ENCODE measurements at regions of chr19 and their contacts with region 1.

Region 1: DNA sequence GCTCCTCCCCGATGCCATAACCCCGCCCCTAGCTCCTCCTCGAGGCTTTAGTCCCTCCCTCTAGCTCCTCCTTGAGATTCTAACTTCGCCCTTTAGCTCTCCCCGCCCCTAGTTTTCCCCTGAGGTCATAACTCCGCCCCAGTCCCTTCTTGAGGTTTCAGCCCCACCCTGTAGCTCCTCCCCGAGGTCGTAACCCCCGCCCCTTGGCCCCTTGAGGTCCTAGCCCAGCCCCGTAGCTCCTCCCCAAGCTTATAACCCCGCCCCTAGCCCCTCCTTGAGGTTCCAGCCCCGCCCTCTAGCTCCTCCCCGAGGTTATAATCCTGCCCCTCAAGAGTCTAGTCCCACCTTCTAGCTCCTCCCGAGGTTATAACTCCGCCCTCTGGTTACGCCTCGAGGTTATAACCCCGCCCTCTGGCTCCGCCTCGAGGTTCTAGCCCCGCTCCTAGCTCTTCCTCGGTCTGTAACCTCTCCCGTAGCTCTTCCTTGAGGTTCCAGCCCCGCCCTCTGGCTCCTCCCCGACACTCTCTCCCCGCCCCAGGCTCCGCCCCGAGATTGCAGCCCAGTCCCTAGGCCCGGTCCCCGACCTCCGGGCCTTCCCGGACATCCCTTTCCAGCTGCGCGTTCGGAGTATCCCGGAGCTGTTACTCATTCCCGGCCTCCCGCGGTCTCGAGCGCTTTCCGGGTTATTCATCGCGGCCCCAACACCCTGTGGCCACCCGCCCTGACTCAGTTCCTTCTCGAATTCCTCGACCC is 1.4 kb downstream of the PLAUR start:
- DNase-seq: peak; percentile 94
- H3K4me3 Mint-ChIP-seq: peak overlapping the region; percentile 93
- H3K27ac Mint-ChIP-seq: peak overlapping the region; percentile 81
- H3K4me1 Mint-ChIP-seq: peaks cover 39% of the 10 kb centered on the region
- H3K27me3 Mint-ChIP-seq: peaks cover 2% of the 10 kb centered on the region

Region 2: GRCh38 chr19:43463381-43464136 is 205.0 kb before region 1 on chr19:
- intact Hi-C with region 1: loop called (anchors 1 kb)
- DNase-seq: peak; percentile 96
- H3K4me3 Mint-ChIP-seq: peak overlapping the region; percentile 92
- H3K27ac Mint-ChIP-seq: peak overlapping the region; percentile 90
- H3K4me1 Mint-ChIP-seq: peaks cover 45% of the 10 kb centered on the region
- H3K27me3 Mint-ChIP-seq: no peaks in the 10 kb centered on the region

Region 3: GRCh38 chr19:43522929-43523328 is 145.7 kb before region 1 on chr19:
- intact Hi-C with region 1: no loop called
- DNase-seq: no peak
- H3K4me3 Mint-ChIP-seq: no peak overlapping the region
- H3K27ac Mint-ChIP-seq: peak overlapping the region; percentile 53
- H3K4me1 Mint-ChIP-seq: peaks cover 33% of the 10 kb centered on the region
- H3K27me3 Mint-ChIP-seq: no peaks in the 10 kb centered on the region

Region 4: GRCh38 chr19:43532962-43533545 is 135.5 kb before region 1 on chr19 and contains the start of gene ZNF575:
- intact Hi-C with region 1: loop called (anchors 1 kb)
- DNase-seq: peak; percentile 81
- H3K4me3 Mint-ChIP-seq: peak within 1 kb of the TSS; percentile 96
- H3K27ac Mint-ChIP-seq: peak within 1 kb of the TSS; percentile 99
- H3K4me1 Mint-ChIP-seq: peaks cover 23% of the 10 kb centered on the region
- H3K27me3 Mint-ChIP-seq: no peaks in the 10 kb centered on the region
- total RNA-seq, gene ZNF575: 1.4 and 2.6 TPM in 2 replicates

Region 5: DNA sequence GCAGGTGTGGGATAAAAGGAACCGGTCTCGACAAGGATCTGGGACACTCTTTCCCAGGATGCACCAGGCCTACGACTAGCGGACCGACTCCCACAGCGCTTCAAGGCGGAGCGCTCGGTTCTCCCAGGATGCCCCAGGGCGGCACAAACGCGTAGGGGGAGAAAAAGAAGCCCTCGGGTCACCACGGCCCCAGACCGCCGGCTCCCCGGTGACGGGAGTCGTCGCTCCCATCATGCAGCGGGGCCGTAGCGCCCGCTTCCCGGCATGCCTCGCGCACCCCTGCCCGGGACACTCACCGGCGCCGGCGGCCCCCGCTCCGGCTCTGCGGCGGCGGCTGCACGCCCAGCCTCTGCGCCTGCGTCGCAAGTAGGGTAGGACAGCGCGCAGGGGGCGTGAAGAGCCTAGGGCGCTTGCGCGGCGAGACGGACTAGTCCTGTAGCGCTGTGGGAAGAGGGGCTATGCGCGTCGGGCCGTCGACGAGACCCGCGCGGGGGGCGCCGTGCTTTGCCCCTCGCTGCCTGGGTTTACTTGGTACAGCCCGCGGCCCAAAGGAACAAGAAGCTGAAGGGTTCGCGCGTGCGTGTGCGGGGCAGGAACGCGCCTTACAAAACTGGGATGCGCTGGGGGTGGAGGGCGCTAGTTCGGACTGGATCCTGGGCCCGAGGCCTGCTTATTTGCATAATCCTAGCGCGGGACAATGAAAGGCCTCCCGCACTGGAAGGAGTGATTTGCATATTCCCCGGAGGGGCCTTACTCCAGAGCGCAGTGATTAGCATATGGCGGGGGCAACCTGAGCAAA is 49.1 kb before region 1 on chr19 and contains the start of gene ZNF428:
- intact Hi-C with region 1: loop called (anchors 1 kb)
- DNase-seq: peak; percentile 86
- H3K4me3 Mint-ChIP-seq: peak within 1 kb of the TSS; percentile 98
- H3K27ac Mint-ChIP-seq: peak within 1 kb of the TSS; percentile 99
- H3K4me1 Mint-ChIP-seq: peaks cover 23% of the 10 kb centered on the region
- H3K27me3 Mint-ChIP-seq: no peaks in the 10 kb centered on the region
- total RNA-seq, gene ZNF428: 17.9 and 20.3 TPM in 2 replicates

Region 6: DNA sequence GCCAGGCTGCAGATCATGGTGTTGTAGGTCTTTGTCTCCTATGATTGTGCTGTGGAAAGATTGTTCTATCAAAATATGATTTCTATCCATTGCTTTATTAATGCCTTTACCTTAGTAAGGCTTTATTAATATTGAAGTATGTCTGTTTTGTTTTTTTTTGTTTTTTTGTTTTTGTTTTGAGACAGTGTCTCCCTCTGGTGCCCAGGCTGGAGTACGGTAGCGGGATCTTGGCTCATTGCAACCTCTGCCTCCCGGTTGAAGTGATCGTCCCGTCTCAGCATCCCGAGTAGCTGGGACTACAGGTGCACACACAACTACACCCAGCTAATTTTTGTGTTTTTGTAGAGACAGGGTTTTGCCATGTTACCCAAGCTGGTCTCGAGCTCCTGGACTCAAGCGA is 55.0 kb after region 1 on chr19:
- intact Hi-C with region 1: loop called (anchors 2 kb)
- DNase-seq: no peak
- H3K4me3 Mint-ChIP-seq: no peak overlapping the region
- H3K27ac Mint-ChIP-seq: no peak overlapping the region
- H3K4me1 Mint-ChIP-seq: peaks cover 4% of the 10 kb centered on the region
- H3K27me3 Mint-ChIP-seq: no peaks in the 10 kb centered on the region

Region 7: GRCh38 chr19:43784981-43785808 is 116.6 kb after region 1 on chr19:
- intact Hi-C with region 1: loop called (anchors 1 kb)
- DNase-seq: peak; percentile 51
- H3K4me3 Mint-ChIP-seq: peak overlapping the region; percentile 66
- H3K27ac Mint-ChIP-seq: peak overlapping the region; percentile 92
- H3K4me1 Mint-ChIP-seq: peaks cover 41% of the 10 kb centered on the region
- H3K27me3 Mint-ChIP-seq: no peaks in the 10 kb centered on the region

Measured in activated T-helper 1 cell treated with anti-CD3 and anti-CD28 coated beads, Interleukin-12 subunit alpha, Interleukin-12 subunit beta, Interleukin-2, Interleukin-4 antibody, amounts not matched to agents 30 ng/mL and 10 ng/mL and 1 ng/mL, durations not matched to agents 14 hours and 24 hours and 36 hours (primary cell).